Right ventricle myocardium inferior (tissue), 1 donor: ENCODE measurements at regions of chr13 and their contacts with region 1.

Region 1: GRCh38 chr13:113153810-113154748 is 4.4 kb upstream of the PROZ start:
- DNase-seq: peak; percentile 93
- ATAC-seq: peak; percentile 84

Region 2: GRCh38 chr13:113044391-113045114 is 109.5 kb before region 1 on chr13:
- intact Hi-C with region 1: loop called (anchors 5 kb)
- DNase-seq: no peak
- ATAC-seq: no peak

Region 3: GRCh38 chr13:113129921-113130750 is 23.9 kb before region 1 on chr13:
- intact Hi-C with region 1: no loop called
- DNase-seq: peak; percentile 72
- ATAC-seq: peak; percentile 72

Region 4: GRCh38 chr13:113208424-113209335 is 54.6 kb after region 1 on chr13 and contains the start of gene PCID2:
- intact Hi-C with region 1: loop called (anchors 5 kb)
- DNase-seq: peak; percentile 96
- ATAC-seq: peak; percentile 86
- total RNA-seq, gene PCID2: 57.2 TPM

Region 5: GRCh38 chr13:113220877-113221276 is 66.8 kb after region 1 on chr13:
- intact Hi-C with region 1: loop called (anchors 5 kb)
- DNase-seq: peak; percentile 75
- ATAC-seq: peak; percentile 58